Common myeloid progenitor, CD34-positive (primary cell): ENCODE measurements at regions of chr7 and their contacts with region 1.

Region 1: DNA sequence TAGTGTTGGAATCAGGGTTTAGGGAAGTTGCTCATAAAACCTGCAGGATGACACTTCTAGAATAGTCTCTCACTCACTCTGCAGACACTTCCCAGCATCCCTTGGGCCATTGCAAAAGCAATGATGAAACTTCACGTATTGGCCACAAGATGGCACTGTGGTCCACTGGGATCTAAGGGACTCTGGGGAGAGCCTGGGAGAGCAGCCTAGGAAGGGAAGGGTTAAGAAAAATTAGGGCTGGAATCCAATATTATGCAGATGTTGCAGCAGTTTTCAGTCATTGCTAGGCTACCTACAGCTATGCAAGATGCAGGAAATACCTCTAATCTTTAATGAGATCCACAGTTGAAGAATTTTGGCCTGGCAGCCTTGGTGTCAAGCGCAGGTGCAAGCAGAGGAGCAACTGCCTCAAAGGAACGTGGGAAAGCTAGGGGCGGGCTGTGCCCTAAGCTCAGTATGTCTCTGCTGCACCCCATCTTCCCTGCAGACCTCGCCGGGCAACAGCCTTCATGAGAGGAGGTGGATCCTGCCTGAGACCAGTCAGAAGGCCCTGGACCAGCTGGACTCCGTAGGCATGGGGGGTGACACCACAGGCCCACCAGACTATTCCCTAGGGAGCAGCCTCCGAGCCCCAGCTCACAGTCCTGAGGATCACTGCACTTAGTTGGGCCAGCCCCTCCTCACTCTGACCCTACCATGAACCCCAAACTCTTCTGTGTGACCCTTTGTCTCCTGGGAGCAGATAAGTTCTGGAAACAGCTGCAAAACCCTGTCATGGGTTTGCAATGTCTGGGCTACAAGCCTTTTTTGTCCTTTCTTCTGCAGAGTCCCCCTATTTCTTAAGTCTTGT is 127.9 kb upstream of the PRSS58 start:
- DNase-seq: peak; percentile 81 to 85 (median 83)
- H3K4me3 ChIP-seq: no peak overlapping the region
- H3K27ac ChIP-seq: no peak overlapping the region
- H3K4me1 ChIP-seq: peaks cover 6 to 41% (median 34%) of the 10 kb centered on the region in 4 experiments
- H3K27me3 ChIP-seq: no peaks in the 10 kb centered on the region

Region 2: GRCh38 chr7:142357953-142358520 is 27.7 kb before region 1 on chr7:
- CTCF ChIA-PET with region 1: interaction called, 152 read pairs
- POLR2A ChIA-PET with region 1: no interaction called
- DNase-seq: peak; percentile 77 to 92 (median 92)
- H3K4me3 ChIP-seq: no peak overlapping the region
- H3K27ac ChIP-seq: no peak overlapping the region
- H3K4me1 ChIP-seq: peaks cover 5 to 36% (median 22%) of the 10 kb centered on the region in 4 experiments
- H3K27me3 ChIP-seq: no peaks in the 10 kb centered on the region

Region 3: GRCh38 chr7:142400042-142400533 is 14.4 kb after region 1 on chr7:
- CTCF ChIA-PET with region 1: interaction called, 36 read pairs
- POLR2A ChIA-PET with region 1: no interaction called
- DNase-seq: no peak
- H3K4me3 ChIP-seq: no peak overlapping the region
- H3K27ac ChIP-seq: no peak overlapping the region
- H3K4me1 ChIP-seq: no peaks in the 10 kb centered on the region
- H3K27me3 ChIP-seq: no peaks in the 10 kb centered on the region

Region 4: GRCh38 chr7:142412551-142413193 is 27.0 kb after region 1 on chr7:
- CTCF ChIA-PET with region 1: interaction called, 36 read pairs
- POLR2A ChIA-PET with region 1: no interaction called
- DNase-seq: peak; percentile 80 to 87 (median 84)
- H3K4me3 ChIP-seq: no peak overlapping the region
- H3K27ac ChIP-seq: no peak overlapping the region
- H3K4me1 ChIP-seq: peaks cover 3 to 57% (median 45%) of the 10 kb centered on the region in 4 experiments
- H3K27me3 ChIP-seq: no peaks in the 10 kb centered on the region

Region 5: GRCh38 chr7:142451296-142451695 is 65.6 kb after region 1 on chr7:
- CTCF ChIA-PET with region 1: no interaction called
- POLR2A ChIA-PET with region 1: no interaction called
- DNase-seq: peak in 2 of 3 donors; percentile 83 to 88
- H3K4me3 ChIP-seq: peak overlapping the region in 2 of 7 experiments; percentile 15 to 24
- H3K27ac ChIP-seq: peak overlapping the region; percentile 13 to 37
- H3K4me1 ChIP-seq: peaks cover 13 to 57% (median 40%) of the 10 kb centered on the region in 4 experiments
- H3K27me3 ChIP-seq: no peaks in the 10 kb centered on the region